PC-3 (cell line): ENCODE measurements at regions of chr10 and their contacts with region 1.

Region 1: GRCh38 chr10:102835007-102835482 is 2.2 kb downstream of the CYP17A1 start:
- DNase-seq: peak; percentile 83
- ATAC-seq: peak; percentile 99
- H3K4me3 ChIP-seq: peak overlapping the region; percentile 52; the same call in 1 of the 2 replicates
- H3K27ac ChIP-seq: no peak overlapping the region
- H3K4me1 ChIP-seq: peaks cover 5% of the 10 kb centered on the region; the same call in 1 of the 2 replicates
- H3K27me3 ChIP-seq: no peaks in the 10 kb centered on the region
- CTCF ChIP-seq: peak; percentile 83

Region 2: DNA sequence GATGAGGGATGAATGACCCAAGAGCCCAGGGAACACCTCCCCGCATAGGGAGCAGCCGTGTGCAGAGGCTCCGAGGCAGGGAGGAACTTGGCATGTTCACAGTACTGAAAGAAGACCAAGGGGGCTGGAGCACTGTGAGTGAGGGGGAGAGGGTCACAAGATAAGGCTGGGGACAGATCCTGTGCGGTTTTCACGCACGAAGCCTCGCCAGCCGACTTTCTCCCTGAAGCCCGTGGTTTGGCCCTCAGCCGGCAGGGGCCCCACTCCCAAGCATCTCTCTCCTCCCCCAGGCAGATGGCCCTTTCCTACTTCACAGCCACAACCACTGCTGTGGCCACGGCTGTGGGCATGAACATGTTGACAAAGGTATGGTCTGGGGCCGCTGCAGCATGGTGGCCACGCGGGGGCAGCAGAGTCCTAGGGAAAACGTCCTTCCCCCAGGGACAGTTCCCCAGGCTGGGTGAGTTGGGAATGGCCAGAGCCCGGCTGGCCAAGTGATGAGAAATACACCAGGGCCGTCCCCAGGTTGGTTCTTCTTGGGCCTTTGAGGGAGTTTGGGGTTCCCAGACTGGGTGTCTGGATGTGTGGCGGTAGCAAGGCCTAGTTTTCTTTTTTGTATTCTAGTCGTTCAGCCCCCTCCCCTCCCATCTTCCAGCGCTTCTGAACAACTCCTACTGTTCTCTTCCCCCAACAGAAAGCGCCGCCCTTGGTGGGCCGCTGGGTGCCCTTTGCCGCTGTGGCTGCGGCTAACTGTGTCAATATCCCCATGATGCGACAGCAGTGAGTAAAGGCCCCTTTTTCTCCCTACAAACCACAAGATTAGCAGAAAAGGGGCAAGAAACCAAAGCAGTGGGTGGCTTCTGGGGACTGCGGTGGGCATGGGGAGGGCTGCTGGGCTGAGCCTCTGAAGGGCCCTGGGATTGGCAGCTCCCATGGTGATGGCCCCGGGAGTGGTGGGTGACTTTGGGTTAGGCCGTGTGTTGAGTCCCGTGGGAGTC is 105.7 kb before region 1 on chr10:
- CTCF ChIA-PET with region 1: interaction called, 3 read pairs
- POLR2A ChIA-PET with region 1: no interaction called
- intact Hi-C with region 1: loop called (anchors 2 kb)
- DNase-seq: peak; percentile 70
- ATAC-seq: peak; percentile 100
- H3K4me3 ChIP-seq: no peak overlapping the region
- H3K27ac ChIP-seq: no peak overlapping the region
- H3K4me1 ChIP-seq: no peaks in the 10 kb centered on the region
- H3K27me3 ChIP-seq: no peaks in the 10 kb centered on the region
- CTCF ChIP-seq: peak; percentile 85

Region 3: DNA sequence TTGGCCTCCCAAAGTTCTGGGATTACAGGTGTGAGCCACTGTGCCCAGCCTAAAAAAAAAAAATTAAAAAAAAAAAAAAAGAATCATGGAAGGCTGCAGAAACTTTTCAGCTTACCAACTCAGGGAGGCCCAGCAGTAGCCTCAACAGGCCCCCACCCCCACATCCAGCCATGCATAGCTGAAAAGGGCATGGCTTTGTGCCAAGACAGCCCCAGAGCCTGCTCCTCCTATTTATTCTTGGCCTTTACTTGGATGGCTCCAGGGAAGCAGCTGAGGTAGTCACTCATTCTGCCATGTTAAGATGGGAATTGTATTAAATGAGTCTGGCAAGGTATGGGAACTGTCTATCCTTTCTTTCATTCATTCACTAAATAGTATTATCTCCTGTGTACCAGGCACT is 69.3 kb after region 1 on chr10:
- CTCF ChIA-PET with region 1: interaction called, 10 read pairs
- POLR2A ChIA-PET with region 1: no interaction called
- intact Hi-C with region 1: loop called (anchors 1 kb)
- DNase-seq: no peak
- ATAC-seq: no peak
- H3K4me3 ChIP-seq: no peak overlapping the region
- H3K27ac ChIP-seq: no peak overlapping the region
- H3K4me1 ChIP-seq: no peaks in the 10 kb centered on the region
- H3K27me3 ChIP-seq: no peaks in the 10 kb centered on the region
- CTCF ChIP-seq: no peak

Region 4: GRCh38 chr10:103069453-103070331 is 234.6 kb after region 1 on chr10:
- CTCF ChIA-PET with region 1: no interaction called
- POLR2A ChIA-PET with region 1: no interaction called
- intact Hi-C with region 1: loop called (anchors 2 kb)
- DNase-seq: peak; percentile 74
- ATAC-seq: peak; percentile 88
- H3K4me3 ChIP-seq: no peak overlapping the region
- H3K27ac ChIP-seq: no peak overlapping the region
- H3K4me1 ChIP-seq: no peaks in the 10 kb centered on the region
- H3K27me3 ChIP-seq: no peaks in the 10 kb centered on the region
- CTCF ChIP-seq: peak; percentile 80

Region 5: GRCh38 chr10:103080891-103081581 is 246.0 kb after region 1 on chr10:
- CTCF ChIA-PET with region 1: no interaction called
- POLR2A ChIA-PET with region 1: no interaction called
- intact Hi-C with region 1: no loop called
- DNase-seq: peak; percentile 11
- ATAC-seq: peak; percentile 28; the same call in 1 of the 2 replicates
- H3K4me3 ChIP-seq: no peak overlapping the region
- H3K27ac ChIP-seq: no peak overlapping the region
- H3K4me1 ChIP-seq: no peaks in the 10 kb centered on the region
- H3K27me3 ChIP-seq: no peaks in the 10 kb centered on the region
- CTCF ChIP-seq: no peak